Activated CD8-positive, alpha-beta T cell treated with anti-CD3 and anti-CD28 coated beads for 36 hours (primary cell): ENCODE measurements at regions of chr2 and their contacts with region 1.

Region 1: DNA sequence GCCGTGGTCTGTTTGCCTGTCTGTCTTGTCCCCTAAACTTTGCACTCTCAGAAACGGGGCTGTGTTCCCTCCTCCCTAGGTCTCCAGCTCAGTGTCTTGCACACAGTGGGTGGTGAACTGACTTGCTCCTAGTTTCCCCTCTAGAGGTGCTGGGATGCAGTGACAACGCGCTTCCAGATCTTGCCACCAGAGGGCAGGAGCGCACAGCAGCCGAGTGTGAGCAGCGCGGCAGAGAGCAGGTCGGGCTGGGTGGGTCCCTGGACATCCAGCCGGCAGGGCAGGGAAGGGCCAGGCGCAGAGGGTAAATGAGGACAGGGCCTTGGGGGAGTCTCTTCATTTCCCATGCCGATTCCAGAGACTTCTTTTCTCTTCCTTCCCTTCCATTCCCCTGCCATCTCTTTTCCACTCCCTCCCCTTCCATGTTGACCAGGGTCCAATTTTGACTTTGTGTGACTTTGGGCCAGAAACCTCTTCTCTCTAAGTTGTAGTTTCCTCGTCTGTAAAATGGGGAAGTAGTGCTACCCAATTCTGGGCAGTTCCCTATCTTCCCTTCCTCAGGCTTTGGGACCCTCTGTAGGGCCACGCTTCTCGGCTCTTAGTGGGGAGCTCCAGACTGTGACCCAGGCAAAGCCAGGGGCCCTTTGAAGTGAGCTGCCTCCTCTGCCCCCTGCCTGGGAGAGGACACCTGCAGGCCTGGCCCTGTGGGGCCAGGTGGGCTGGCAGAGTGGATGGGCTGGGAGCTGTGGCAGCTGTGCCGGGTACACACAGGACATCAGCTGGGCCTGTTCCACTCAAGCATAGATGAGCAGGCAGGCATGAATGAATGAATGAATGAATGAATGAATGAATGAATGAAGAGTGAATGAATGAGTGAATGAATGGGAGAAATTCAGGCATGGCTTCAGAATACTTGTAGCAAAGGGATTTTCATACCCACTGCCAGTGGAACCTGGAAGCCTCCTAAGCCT is 43.3 kb upstream of the TAF1B start:
- DNase-seq: peak; percentile 92
- ATAC-seq: peak; percentile 94
- H3K4me3 Mint-ChIP-seq: peak overlapping the region; percentile 12
- H3K27ac Mint-ChIP-seq: peak overlapping the region; percentile 61
- H3K4me1 Mint-ChIP-seq: peaks cover 18% of the 10 kb centered on the region
- H3K27me3 Mint-ChIP-seq: no peaks in the 10 kb centered on the region
- CTCF ChIP-seq: peak; percentile 89

Region 2: DNA sequence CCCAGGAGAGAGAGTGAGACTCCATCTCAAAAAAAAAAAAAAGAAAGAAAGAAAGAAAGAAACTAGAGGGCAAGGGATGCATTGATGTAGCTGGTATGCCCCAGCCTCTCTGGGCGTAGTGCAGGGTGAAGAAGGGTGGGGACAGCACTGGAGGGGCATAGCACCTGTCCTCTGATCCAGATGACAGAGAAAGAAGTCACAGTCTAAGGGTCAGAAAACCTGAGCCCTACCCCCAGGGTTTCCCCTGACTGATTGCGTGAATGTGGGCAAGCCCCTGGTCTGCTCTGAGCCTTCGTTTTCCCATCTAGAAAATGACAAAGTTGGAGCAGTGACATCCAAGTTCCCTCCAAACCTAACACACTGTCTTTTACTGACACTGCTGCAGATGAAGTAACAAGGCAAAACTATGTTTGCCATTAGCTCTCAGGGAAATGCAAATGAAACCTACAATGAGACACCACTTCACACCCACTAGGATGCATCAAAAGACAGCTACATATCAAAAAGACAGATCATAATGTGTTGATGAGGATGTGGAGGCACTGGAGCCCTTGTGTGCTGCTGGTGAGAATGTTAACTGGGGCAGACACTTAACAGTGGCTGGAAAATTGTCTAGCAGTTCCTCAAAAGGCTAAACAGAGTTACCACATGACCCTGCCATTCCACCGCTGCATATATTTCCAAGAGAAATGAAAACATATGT is 149.7 kb before region 1 on chr2:
- CTCF ChIA-PET with region 1: no interaction called
- POLR2A ChIA-PET with region 1: no interaction called
- intact Hi-C with region 1: no loop called
- DNase-seq: no peak
- ATAC-seq: peak; percentile 64
- H3K4me3 Mint-ChIP-seq: no peak overlapping the region
- H3K27ac Mint-ChIP-seq: no peak overlapping the region
- H3K4me1 Mint-ChIP-seq: peaks cover 15% of the 10 kb centered on the region
- H3K27me3 Mint-ChIP-seq: no peaks in the 10 kb centered on the region
- CTCF ChIP-seq: no peak

Region 3: DNA sequence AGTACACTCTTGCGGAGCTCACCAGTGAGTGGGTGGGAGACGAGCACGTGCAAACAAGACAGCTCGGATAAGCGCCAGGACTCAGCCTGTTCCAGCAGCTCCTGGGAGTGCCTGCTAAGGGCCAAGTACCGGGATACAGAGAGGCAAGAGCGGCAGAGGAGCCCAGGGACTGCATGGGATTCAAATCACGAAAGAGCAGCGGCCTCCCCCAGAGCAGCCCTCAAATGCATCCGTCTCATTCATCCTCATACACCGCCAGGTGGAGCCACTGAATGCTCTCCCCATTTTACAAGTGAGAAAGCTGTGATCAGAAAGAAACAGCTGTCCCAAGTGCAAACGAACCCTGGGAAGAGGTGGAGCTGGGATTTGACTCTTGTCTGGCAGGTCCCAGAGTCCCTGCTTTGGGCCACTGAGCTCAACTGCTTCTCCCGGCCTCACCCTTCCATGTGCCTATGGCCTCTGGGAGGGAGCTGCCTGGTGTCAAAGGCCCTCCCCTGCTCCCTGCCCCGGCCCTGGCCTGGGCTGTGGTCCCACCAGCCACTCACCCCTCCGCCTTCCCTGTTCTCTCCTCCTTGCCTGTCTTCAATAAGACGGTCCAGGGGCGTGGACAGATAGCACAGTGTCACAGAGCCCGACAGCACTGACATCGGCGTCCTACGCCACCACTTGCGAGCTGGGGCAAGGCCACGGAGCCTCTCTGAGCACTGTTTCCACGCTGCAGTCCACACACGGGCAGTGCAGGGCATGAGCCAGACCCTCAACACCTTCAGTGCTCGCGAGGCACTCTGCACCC is 29.4 kb before region 1 on chr2:
- CTCF ChIA-PET with region 1: interaction called, 38 read pairs
- POLR2A ChIA-PET with region 1: no interaction called
- intact Hi-C with region 1: no loop called
- DNase-seq: peak; percentile 69
- ATAC-seq: peak; percentile 60
- H3K4me3 Mint-ChIP-seq: no peak overlapping the region
- H3K27ac Mint-ChIP-seq: no peak overlapping the region
- H3K4me1 Mint-ChIP-seq: peaks cover 13% of the 10 kb centered on the region
- H3K27me3 Mint-ChIP-seq: peaks cover 6% of the 10 kb centered on the region
- CTCF ChIP-seq: peak; percentile 42

Region 4: DNA sequence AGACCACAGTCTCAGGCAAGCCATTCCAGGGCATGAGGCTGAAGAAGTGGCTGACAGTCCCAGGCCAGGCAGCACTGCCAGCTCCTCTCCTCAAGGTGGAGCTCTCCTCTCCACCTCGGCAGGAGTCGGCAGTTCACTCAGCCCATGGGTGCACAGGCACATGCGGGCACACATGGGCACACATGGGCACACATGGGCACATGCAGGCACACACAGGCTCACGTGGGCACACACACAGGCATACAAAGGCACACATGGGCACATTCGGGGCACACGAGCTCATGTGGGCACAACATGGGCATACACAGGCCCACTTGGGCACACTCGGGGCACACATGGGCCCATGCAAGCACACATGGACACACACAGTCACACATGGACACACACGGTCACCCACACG is 21.9 kb before region 1 on chr2:
- CTCF ChIA-PET with region 1: interaction called, 38 read pairs
- POLR2A ChIA-PET with region 1: interaction called, 4 read pairs
- intact Hi-C with region 1: no loop called
- DNase-seq: no peak
- ATAC-seq: no peak
- H3K4me3 Mint-ChIP-seq: no peak overlapping the region
- H3K27ac Mint-ChIP-seq: no peak overlapping the region
- H3K4me1 Mint-ChIP-seq: peaks cover 34% of the 10 kb centered on the region
- H3K27me3 Mint-ChIP-seq: no peaks in the 10 kb centered on the region
- CTCF ChIP-seq: no peak

Region 5: GRCh38 chr2:9789371-9789968 is 10.5 kb before region 1 on chr2:
- CTCF ChIA-PET with region 1: interaction called, 38 read pairs
- POLR2A ChIA-PET with region 1: interaction called, 3 read pairs
- intact Hi-C with region 1: no loop called
- DNase-seq: no peak
- ATAC-seq: no peak
- H3K4me3 Mint-ChIP-seq: no peak overlapping the region
- H3K27ac Mint-ChIP-seq: no peak overlapping the region
- H3K4me1 Mint-ChIP-seq: peaks cover 8% of the 10 kb centered on the region
- H3K27me3 Mint-ChIP-seq: peaks cover 3% of the 10 kb centered on the region
- CTCF ChIP-seq: no peak

Region 6: GRCh38 chr2:10043906-10044601 is 244.1 kb after region 1 on chr2:
- CTCF ChIA-PET with region 1: interaction called, 19 read pairs
- POLR2A ChIA-PET with region 1: no interaction called
- intact Hi-C with region 1: no loop called
- DNase-seq: peak; percentile 95
- ATAC-seq: peak; percentile 82
- H3K4me3 Mint-ChIP-seq: peak overlapping the region; percentile 64
- H3K27ac Mint-ChIP-seq: peak overlapping the region; percentile 73
- H3K4me1 Mint-ChIP-seq: peaks cover 8% of the 10 kb centered on the region
- H3K27me3 Mint-ChIP-seq: peaks cover 2% of the 10 kb centered on the region
- CTCF ChIP-seq: no peak